Activated T-helper 1 cell treated with anti-CD3 and anti-CD28 coated beads, Interleukin-12 subunit alpha, Interleukin-12 subunit beta, Interleukin-2, Interleukin-4 antibody, amounts not matched to agents 30 ng/mL and 10 ng/mL and 1 ng/mL, durations not matched to agents 14 hours and 24 hours and 36 hours (primary cell): ENCODE measurements at regions of chr21 and their contacts with region 1.

Region 1: DNA sequence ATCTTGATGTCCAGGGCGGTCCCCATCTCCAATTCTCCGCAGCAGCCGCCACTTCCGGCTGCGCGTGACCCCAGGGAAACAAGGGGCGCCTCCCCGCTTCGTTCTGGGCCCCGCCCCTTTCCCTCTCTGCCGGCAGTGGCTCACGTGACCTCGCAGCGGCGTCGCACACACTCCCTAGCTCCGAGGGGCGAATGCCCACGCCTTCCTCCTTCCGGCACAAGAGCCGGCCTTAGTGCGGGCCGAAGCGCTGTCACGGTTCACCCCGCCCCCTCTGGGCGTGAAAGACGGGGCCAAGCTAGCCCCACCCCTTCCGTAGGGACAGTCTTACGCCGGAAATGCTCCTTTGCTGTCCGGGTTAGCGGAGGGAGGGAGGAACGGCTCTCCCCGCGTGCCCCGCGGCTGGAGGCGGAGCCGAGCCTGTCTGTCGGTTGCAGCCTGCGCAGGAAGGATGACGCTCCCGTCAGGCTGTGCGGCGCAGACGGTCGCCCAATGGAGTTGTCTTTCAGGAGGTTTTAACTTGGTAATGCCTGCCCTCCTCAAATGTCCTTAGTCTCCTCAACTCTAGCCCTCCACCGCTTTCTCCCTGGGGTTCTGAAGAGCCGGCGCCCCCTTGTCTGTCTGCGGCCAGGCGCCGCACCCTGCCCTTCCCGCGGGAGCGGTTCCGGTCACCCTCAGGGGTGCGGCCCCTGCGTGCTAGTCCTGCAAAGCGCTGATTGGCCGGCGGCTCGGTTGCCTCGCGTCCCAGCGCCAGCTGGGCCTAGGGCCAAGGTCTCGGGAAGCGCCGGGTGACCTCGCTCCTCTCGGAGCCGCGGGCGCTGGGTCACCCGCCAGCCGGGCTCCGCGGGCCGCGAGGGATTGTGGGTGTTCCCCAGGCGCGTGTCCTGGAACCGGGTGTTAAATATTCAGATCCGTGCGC is at the start of gene VPS26C:
- DNase-seq: peak; percentile 99
- H3K4me3 Mint-ChIP-seq: peak within 1 kb of the TSS; percentile 97
- H3K27ac Mint-ChIP-seq: peak within 1 kb of the TSS; percentile 98
- H3K4me1 Mint-ChIP-seq: peaks cover 51% of the 10 kb centered on the region
- H3K27me3 Mint-ChIP-seq: peaks cover 8% of the 10 kb centered on the region
- total RNA-seq, gene VPS26C: 53.8 and 58.9 TPM in 2 replicates

Region 2: DNA sequence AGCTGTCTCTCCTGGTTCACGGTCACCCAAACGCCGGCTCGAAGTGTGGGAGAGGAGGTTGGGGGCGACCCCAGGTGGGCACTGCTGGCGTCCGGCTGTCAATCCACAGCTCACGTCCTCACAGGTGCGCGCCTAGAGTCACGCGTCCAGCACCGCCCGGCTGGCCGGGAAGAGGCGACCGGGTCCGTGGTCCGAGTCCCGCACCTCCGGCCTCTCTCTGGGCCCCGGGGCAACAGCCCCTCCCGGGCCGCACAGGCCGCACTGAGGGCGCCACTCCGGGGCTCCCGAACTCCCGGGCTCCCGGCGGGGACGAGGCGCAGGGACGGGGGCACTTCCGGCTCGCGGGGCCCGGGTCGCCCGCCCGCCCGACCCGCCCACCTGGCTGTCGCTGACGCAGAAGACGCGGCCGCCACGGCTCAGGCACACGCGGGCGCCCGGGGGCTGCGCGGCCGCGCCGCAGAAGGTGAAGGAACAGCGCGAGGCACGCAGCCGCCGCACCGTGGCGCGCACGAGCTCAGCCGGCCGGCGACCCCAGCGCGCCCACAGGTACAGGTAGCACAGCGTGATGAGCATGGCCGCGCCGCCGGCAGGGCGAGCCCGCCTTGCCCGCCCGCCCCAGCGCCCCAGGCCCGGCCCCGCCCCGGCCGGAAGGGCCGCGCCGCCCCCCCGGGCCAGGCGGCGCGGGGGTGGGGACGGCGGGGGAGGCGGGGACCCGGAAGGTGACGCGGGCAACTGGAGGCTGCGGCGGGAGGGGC is 301.3 kb before region 1 on chr21 and contains the start of gene HLCS:
- intact Hi-C with region 1: loop called (anchors 1 kb)
- DNase-seq: peak; percentile 69
- H3K4me3 Mint-ChIP-seq: peak within 1 kb of the TSS; percentile 93
- H3K27ac Mint-ChIP-seq: peak within 1 kb of the TSS; percentile 90
- H3K4me1 Mint-ChIP-seq: peaks cover 22% of the 10 kb centered on the region
- H3K27me3 Mint-ChIP-seq: no peaks in the 10 kb centered on the region
- total RNA-seq, gene HLCS: 12.6 and 15.8 TPM in 2 replicates

Region 3: GRCh38 chr21:37072988-37073416 is 194.5 kb before region 1 on chr21 and contains the starts of genes PIGP and TTC3:
- intact Hi-C with region 1: loop called (anchors 1 kb)
- DNase-seq: peak; percentile 93
- H3K4me3 Mint-ChIP-seq: peak within 1 kb of the TSS; percentile 95
- H3K27ac Mint-ChIP-seq: peak within 1 kb of the TSS; percentile 95
- H3K4me1 Mint-ChIP-seq: peaks cover 50% of the 10 kb centered on the region
- H3K27me3 Mint-ChIP-seq: peaks cover 2% of the 10 kb centered on the region
- total RNA-seq, gene PIGP: 18.2 and 20.1 TPM in 2 replicates
- total RNA-seq, gene TTC3: 61.8 and 69.3 TPM in 2 replicates

Region 4: GRCh38 chr21:37220981-37221664 is 46.4 kb before region 1 on chr21:
- intact Hi-C with region 1: loop called (anchors 1 kb)
- DNase-seq: peak; percentile 89
- H3K4me3 Mint-ChIP-seq: peak overlapping the region; percentile 90
- H3K27ac Mint-ChIP-seq: peak overlapping the region; percentile 91
- H3K4me1 Mint-ChIP-seq: peaks cover 48% of the 10 kb centered on the region
- H3K27me3 Mint-ChIP-seq: peaks cover 1% of the 10 kb centered on the region

Region 5: GRCh38 chr21:37319551-37319950 is 52.0 kb after region 1 on chr21:
- intact Hi-C with region 1: no loop called
- DNase-seq: no peak
- H3K4me3 Mint-ChIP-seq: no peak overlapping the region
- H3K27ac Mint-ChIP-seq: no peak overlapping the region
- H3K4me1 Mint-ChIP-seq: no peaks in the 10 kb centered on the region
- H3K27me3 Mint-ChIP-seq: peaks cover 15% of the 10 kb centered on the region

Region 6: GRCh38 chr21:37463083-37463801 is 195.7 kb after region 1 on chr21:
- intact Hi-C with region 1: loop called (anchors 5 kb)
- DNase-seq: peak; percentile 14
- H3K4me3 Mint-ChIP-seq: no peak overlapping the region
- H3K27ac Mint-ChIP-seq: peak overlapping the region; percentile 21
- H3K4me1 Mint-ChIP-seq: peaks cover 56% of the 10 kb centered on the region
- H3K27me3 Mint-ChIP-seq: no peaks in the 10 kb centered on the region

Region 7: GRCh38 chr21:39183237-39184007 is 1915.9 kb after region 1 on chr21 and contains the start of gene PSMG1:
- intact Hi-C with region 1: loop called (anchors 2 kb)
- DNase-seq: peak; percentile 91
- H3K4me3 Mint-ChIP-seq: peak within 1 kb of the TSS; percentile 98
- H3K27ac Mint-ChIP-seq: peak within 1 kb of the TSS; percentile 98
- H3K4me1 Mint-ChIP-seq: peaks cover 55% of the 10 kb centered on the region
- H3K27me3 Mint-ChIP-seq: no peaks in the 10 kb centered on the region
- total RNA-seq, gene PSMG1: 102 and 103 TPM in 2 replicates